ENCODE measurements at regions of chr7 and their contacts with region 1.

Region 1: DNA sequence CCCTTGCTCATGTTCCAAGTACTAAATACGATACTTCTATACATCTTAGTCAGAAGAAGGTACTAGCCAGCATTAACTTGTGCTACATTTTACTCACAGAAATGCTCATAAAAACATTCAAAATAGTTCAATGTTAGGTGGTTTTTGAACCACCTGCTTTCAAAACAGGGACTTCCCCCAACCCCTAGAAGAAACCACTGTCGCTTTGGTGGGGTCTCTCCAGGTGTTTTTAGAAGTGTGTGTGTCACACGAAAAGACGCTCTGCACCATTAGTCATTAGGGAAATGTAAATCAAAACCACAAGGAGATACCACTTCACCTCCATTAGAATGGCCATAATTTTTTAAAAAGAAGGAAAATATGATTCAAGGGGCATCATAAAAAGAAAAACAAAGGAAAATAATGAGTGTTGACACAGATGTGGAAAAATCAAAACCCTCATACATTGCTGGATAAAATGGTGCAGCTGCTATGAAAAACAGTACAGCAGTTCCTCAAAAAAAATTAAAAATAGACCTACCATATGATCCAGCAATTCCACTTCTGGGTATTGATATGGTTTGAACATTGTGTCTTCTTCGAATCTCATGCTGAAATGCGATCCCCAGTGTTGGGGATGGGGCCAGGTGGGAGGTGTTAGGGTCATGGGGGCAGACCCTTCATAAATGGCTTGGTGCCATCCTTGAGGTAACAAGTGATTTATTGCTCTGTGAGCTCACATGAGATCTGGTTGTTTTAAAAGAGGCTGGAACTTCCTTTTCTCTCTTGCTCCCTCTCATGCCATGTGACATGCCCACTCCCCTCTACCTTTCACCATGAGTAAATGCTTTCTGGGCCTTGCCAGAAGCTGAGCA is 74.2 kb downstream of the MALSU1 start:
- DNase-seq: peak; percentile 80
- H3K4me3 Mint-ChIP-seq: peak overlapping the region; percentile 37
- H3K27ac Mint-ChIP-seq: peak overlapping the region; percentile 94
- H3K4me1 Mint-ChIP-seq: peaks cover 51% of the 10 kb centered on the region
- H3K27me3 Mint-ChIP-seq: peaks cover 17% of the 10 kb centered on the region

Region 2: GRCh38 chr7:23298885-23299769 is 74.3 kb before region 1 on chr7 and contains the start of gene MALSU1:
- intact Hi-C with region 1: loop called (anchors 2 kb)
- DNase-seq: peak; percentile 99
- H3K4me3 Mint-ChIP-seq: peak within 1 kb of the TSS; percentile 93
- H3K27ac Mint-ChIP-seq: peak within 1 kb of the TSS; percentile 90
- H3K4me1 Mint-ChIP-seq: peaks cover 28% of the 10 kb centered on the region
- H3K27me3 Mint-ChIP-seq: no peaks in the 10 kb centered on the region
- total RNA-seq, gene MALSU1: 92.8 and 98.8 TPM in 2 replicates

Region 3: GRCh38 chr7:23394488-23395171 is 21.3 kb after region 1 on chr7:
- intact Hi-C with region 1: loop called (anchors 1 kb)
- DNase-seq: no peak
- H3K4me3 Mint-ChIP-seq: no peak overlapping the region
- H3K27ac Mint-ChIP-seq: no peak overlapping the region
- H3K4me1 Mint-ChIP-seq: peaks cover 12% of the 10 kb centered on the region
- H3K27me3 Mint-ChIP-seq: peaks cover 5% of the 10 kb centered on the region

Region 4: DNA sequence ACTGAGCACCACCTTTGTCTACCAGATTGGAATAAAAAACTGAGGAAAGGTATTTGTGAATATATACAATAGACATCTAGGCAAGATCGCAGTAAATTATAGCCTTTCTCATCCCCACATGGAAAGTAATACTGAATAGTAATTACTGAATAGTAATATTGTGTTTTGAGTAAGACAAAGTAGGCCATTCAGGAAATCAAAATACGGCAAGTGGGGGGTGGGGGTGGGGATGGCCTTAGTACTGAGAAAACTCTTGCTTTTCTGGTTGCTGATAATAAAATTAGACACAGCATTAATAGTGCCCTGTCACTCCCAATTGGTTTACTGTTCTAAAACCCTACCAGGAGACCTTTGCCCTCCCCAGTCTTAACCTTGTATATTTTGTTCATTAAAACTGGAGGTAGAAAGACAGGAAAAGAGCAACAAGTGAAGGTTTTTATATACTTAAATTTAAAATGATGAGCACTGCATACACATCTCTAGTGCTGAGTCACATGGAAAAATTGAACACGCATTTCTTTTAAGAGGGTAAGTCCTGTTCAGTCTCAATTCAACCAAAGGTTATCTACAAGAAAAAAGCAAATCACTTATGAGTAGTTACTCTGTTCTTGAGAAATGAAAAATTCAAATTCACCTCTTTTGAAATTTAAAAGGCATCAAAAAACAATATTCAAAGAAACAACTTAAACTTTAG is 31.3 kb after region 1 on chr7:
- intact Hi-C with region 1: loop called (anchors 1 kb)
- DNase-seq: no peak
- H3K4me3 Mint-ChIP-seq: peak overlapping the region; percentile 23
- H3K27ac Mint-ChIP-seq: peak overlapping the region; percentile 88
- H3K4me1 Mint-ChIP-seq: peaks cover 16% of the 10 kb centered on the region
- H3K27me3 Mint-ChIP-seq: peaks cover 2% of the 10 kb centered on the region

Region 5: GRCh38 chr7:23474094-23474828 is 100.9 kb after region 1 on chr7:
- intact Hi-C with region 1: loop called (anchors 2 kb)
- DNase-seq: peak; percentile 96
- H3K4me3 Mint-ChIP-seq: peak overlapping the region; percentile 84
- H3K27ac Mint-ChIP-seq: peak overlapping the region; percentile 75
- H3K4me1 Mint-ChIP-seq: peaks cover 27% of the 10 kb centered on the region
- H3K27me3 Mint-ChIP-seq: peaks cover 60% of the 10 kb centered on the region

Measured in activated CD4-positive, alpha-beta T cell treated with anti-CD3 and anti-CD28 coated beads, Interleukin-2, amount 10 ng/mL, durations not matched to agents 24 days and 14 days (primary cell).